ENCODE measurements at regions of chr10 and their contacts with region 1.

Region 1: DNA sequence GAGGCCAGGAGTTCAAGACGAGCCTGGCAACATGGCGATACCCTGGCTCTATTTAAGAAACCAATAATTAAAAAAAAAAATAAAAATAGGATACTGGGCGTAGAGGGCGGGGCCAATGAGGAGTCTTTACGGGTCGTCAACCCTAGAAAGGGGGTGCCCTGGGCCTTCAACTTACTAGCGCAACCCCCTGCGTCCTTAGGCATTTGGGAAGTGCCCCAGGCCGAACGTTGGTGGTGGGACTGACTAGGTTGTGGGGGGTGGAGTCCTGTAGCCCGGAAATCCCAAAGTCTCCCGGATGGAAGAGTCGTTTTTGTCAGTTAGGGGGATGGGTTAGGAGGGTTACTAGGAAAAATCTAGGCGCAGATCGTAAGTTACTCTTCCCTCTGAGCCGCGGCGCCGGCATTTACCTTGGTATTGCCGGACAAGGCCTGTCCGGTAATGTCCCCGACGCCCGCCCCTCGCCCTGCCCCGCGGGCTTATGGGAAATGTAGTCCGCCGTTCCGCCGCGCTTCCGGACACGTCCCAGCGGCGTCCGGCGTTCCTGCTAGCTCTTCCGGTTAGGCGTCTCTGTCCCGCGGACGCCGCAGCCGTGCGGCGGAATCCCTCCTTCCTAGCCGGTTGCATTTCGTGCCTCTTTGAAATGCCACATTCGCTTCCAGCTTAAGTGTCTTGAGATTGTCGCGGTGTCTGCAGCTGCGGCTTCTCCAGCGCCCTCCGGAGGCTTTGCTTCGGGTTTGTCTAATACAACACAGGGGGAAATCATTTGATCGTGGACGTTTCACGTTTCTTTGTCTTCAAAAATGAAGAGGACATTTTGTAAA is 1.3 kb upstream of the ACBD5 start:
- DNase-seq: peak; percentile 79 to 89 (median 85)
- ATAC-seq: peak; percentile 82
- H3K4me3 ChIP-seq: peak overlapping the region; percentile 80
- H3K4me3 Mint-ChIP-seq: peak overlapping the region; percentile 91 to 99 (median 98)
- H3K27ac ChIP-seq: peak overlapping the region; percentile 93
- H3K27ac Mint-ChIP-seq: peak overlapping the region; percentile 93 to 100 (median 97)
- H3K4me1 ChIP-seq: peaks cover 8 to 21% of the 10 kb centered on the region in 2 donors
- H3K4me1 Mint-ChIP-seq: peaks cover 17 to 35% (median 34%) of the 10 kb centered on the region in 7 donors
- H3K27me3 ChIP-seq: no peaks in the 10 kb centered on the region
- H3K27me3 Mint-ChIP-seq: peaks cover 0 to 5% (median 0%) of the 10 kb centered on the region in 5 donors

Region 2: DNA sequence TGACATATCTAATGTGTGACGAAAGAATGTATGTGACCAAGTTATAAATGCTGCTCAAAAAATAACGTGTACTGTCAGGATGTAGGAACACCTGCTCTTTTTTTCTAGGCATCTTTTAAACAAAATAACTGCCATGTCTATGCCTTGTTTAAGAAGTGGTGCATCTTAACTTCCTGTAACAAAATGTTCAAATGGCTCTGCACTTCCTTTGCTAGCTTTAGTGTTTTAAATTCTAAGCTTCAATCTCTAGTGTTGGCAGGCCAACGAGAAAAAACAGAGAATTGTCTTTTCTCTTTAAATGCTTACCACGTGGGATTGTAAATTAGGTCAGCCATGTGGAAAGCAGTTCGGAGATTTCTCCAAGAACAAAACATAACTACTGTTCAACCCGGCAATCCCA is 558.9 kb before region 1 on chr10:
- CTCF ChIA-PET with region 1: no interaction called
- POLR2A ChIA-PET with region 1: no interaction called
- intact Hi-C with region 1: loop called in 1 of 2 experiments (anchors 5 kb)
- DNase-seq: peak in 7 of 9 donors; percentile 65 to 91 (median 85)
- ATAC-seq: peak; percentile 91
- H3K4me3 ChIP-seq: no peak overlapping the region
- H3K4me3 Mint-ChIP-seq: peak overlapping the region in 9 of 10 donors; percentile 26 to 83 (median 71)
- H3K27ac ChIP-seq: peak overlapping the region; percentile 69
- H3K27ac Mint-ChIP-seq: peak overlapping the region in 8 of 9 donors; percentile 94 to 99 (median 97)
- H3K4me1 ChIP-seq: peaks cover 0 to 33% of the 10 kb centered on the region in 2 donors
- H3K4me1 Mint-ChIP-seq: peaks cover 14 to 63% (median 39%) of the 10 kb centered on the region in 7 donors
- H3K27me3 ChIP-seq: no peaks in the 10 kb centered on the region
- H3K27me3 Mint-ChIP-seq: peaks cover 0 to 9% (median 0%) of the 10 kb centered on the region in 5 donors

Region 3: GRCh38 chr10:27099916-27100812 is 141.7 kb before region 1 on chr10 and contains the start of gene ANKRD26:
- CTCF ChIA-PET with region 1: interaction called, 4 read pairs
- POLR2A ChIA-PET with region 1: interaction called, 13 read pairs
- intact Hi-C with region 1: loop called (anchors 1 kb)
- DNase-seq: peak; percentile 92 to 97 (median 95)
- ATAC-seq: peak; percentile 76
- H3K4me3 ChIP-seq: peak within 1 kb of the TSS; percentile 89
- H3K4me3 Mint-ChIP-seq: peak within 1 kb of the TSS; percentile 86 to 97 (median 92)
- H3K27ac ChIP-seq: peak within 1 kb of the TSS; percentile 84
- H3K27ac Mint-ChIP-seq: peak within 1 kb of the TSS; percentile 92 to 99 (median 98)
- H3K4me1 ChIP-seq: peaks cover 18 to 28% of the 10 kb centered on the region in 2 donors
- H3K4me1 Mint-ChIP-seq: peaks cover 30 to 64% (median 51%) of the 10 kb centered on the region in 7 donors
- H3K27me3 ChIP-seq: no peaks in the 10 kb centered on the region
- H3K27me3 Mint-ChIP-seq: peaks cover 0 to 2% (median 0%) of the 10 kb centered on the region in 5 donors
- total RNA-seq, gene ANKRD26: 6.4 to 14.2 (median 8.9) TPM

Region 4: DNA sequence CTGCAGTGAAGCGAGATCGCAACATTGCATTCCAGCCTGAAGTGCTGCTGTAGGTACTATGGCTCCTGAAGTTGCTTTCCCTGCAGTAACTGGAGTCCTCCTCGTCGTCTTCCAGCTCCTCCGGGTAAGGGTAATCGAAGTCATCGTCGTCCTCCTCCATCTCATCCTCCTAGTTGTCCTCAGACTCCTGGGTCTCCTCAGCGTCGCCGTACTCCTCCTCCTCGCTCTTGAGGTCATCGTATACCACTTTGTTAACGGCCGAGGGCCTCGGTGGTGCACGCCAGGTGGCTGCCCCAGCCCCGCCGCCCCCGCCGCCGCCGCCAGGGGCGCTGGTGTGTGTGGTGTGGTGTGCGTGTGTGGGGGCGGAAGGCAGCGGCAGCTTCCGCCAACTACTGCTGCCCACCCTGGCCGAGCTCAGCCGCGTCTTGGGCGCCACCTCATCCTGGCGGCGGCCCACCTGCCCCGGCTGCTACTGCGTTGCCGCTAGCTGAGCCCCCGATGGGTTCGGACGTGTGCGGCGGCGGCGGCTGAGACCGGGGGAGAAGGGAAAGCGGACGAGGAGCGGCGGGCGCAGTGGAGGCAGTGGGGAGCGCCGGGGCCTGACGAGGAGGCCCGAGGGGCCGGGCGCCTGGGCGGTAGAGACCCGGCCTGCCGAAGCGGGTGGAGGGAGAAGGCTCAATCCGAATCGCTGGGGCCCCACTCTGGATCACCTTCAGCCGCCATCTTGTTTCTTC is 10.6 kb after region 1 on chr10:
- CTCF ChIA-PET with region 1: interaction called, 7 read pairs
- POLR2A ChIA-PET with region 1: interaction called, 83 read pairs
- intact Hi-C with region 1: loop called (anchors 1 kb)
- DNase-seq: peak; percentile 66 to 87 (median 80)
- ATAC-seq: peak; percentile 97
- H3K4me3 ChIP-seq: peak overlapping the region; percentile 51
- H3K4me3 Mint-ChIP-seq: peak overlapping the region; percentile 69 to 88 (median 80)
- H3K27ac ChIP-seq: peak overlapping the region; percentile 79
- H3K27ac Mint-ChIP-seq: peak overlapping the region; percentile 40 to 88 (median 81)
- H3K4me1 ChIP-seq: peaks cover 0 to under 1% of the 10 kb centered on the region in 2 donors
- H3K4me1 Mint-ChIP-seq: peaks cover 8 to 15% (median 13%) of the 10 kb centered on the region in 7 donors
- H3K27me3 ChIP-seq: no peaks in the 10 kb centered on the region
- H3K27me3 Mint-ChIP-seq: peaks cover 0 to 5% (median 5%) of the 10 kb centered on the region in 5 donors

Region 5: DNA sequence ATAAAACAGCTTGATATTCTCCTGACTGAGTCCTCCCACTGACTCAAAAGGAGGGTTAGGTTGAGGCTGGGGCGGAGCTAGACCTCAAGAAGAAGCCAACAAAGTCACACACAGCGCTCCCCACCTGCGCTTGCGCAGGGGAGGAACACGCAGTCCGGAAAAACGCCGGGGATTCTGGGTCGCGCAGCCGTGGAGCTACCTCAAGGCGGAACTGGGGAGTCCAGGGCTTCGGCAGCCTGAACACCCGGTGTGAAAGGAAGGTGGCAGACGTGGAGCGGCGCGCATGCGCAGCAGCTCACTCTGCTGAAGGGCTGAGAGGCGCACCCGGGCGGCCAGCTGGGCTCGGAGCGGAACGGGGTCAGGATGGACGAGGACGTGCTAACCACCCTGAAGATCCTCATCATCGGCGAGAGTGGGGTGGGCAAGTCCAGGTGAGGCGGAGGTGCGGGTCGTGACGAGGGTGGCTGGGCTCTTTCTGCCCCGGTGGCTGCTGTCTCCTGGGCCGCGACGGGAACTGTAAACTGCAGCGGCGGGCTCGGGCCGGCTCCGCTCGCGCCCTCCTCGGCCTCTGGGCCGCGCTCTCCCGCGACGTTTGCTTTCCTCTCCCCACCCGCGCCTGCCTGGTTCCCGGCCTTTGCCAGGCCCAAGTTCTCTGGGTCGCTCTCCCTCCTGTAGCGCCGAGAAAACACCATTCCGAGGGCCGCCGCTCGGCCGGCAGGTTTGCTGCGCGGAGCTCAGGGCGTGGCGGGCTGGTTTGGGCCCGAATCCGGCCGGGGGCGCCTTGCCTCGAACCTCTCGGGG is 262.3 kb after region 1 on chr10 and contains the start of gene RAB18:
- CTCF ChIA-PET with region 1: no interaction called
- POLR2A ChIA-PET with region 1: interaction called, 20 read pairs
- intact Hi-C with region 1: loop called in 1 of 2 experiments (anchors 1 kb)
- DNase-seq: peak; percentile 93 to 99 (median 98)
- ATAC-seq: peak; percentile 97
- H3K4me3 ChIP-seq: peak within 1 kb of the TSS; percentile 82
- H3K4me3 Mint-ChIP-seq: peak within 1 kb of the TSS; percentile 95 to 100 (median 99)
- H3K27ac ChIP-seq: peak within 1 kb of the TSS; percentile 87
- H3K27ac Mint-ChIP-seq: peak within 1 kb of the TSS; percentile 96 to 99 (median 98)
- H3K4me1 ChIP-seq: peaks cover 13 to 18% of the 10 kb centered on the region in 2 donors
- H3K4me1 Mint-ChIP-seq: peaks cover 39 to 59% (median 55%) of the 10 kb centered on the region in 7 donors
- H3K27me3 ChIP-seq: no peaks in the 10 kb centered on the region
- H3K27me3 Mint-ChIP-seq: peaks cover 0 to 7% (median 0%) of the 10 kb centered on the region in 5 donors
- total RNA-seq, gene RAB18: 69.1 to 96.1 (median 73.6) TPM

Region 6: DNA sequence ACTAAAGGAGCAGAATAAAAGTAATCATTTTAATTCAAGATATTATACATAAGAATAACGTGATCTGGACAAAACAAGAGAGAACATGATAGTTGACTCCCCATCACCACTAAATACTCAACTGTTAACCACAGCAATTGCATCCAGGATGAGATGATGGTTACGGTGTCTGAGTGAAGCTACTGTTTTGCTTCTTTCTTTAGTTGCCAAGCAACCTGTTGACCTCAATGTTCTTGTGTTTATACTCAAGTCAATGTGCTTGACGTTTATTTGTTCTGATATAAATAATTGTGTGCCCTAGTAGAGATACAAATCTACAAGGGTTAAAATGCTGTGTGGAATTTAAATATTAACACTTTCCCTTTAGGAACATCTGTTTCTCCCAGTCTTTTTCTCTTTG is 1092.4 kb after region 1 on chr10:
- CTCF ChIA-PET with region 1: no interaction called
- POLR2A ChIA-PET with region 1: no interaction called
- intact Hi-C with region 1: loop called in 1 of 2 experiments (anchors 1 kb)
- DNase-seq: peak in 8 of 9 donors; percentile 32 to 95 (median 91)
- ATAC-seq: peak; percentile 83
- H3K4me3 ChIP-seq: peak overlapping the region; percentile 62
- H3K4me3 Mint-ChIP-seq: peak overlapping the region; percentile 72 to 97 (median 91)
- H3K27ac ChIP-seq: peak overlapping the region; percentile 98
- H3K27ac Mint-ChIP-seq: peak overlapping the region; percentile 96 to 100 (median 99)
- H3K4me1 ChIP-seq: peaks cover 33 to 56% of the 10 kb centered on the region in 2 donors
- H3K4me1 Mint-ChIP-seq: peaks cover 44 to 88% (median 71%) of the 10 kb centered on the region in 7 donors
- H3K27me3 ChIP-seq: no peaks in the 10 kb centered on the region
- H3K27me3 Mint-ChIP-seq: peaks cover 0 to 9% (median 0%) of the 10 kb centered on the region in 5 donors